ENCODE measurements at regions of chr3 and their contacts with region 1.

Region 1: GRCh38 chr3:37543666-37544065 is 318.0 kb upstream of the CTDSPL start:
- DNase-seq: peak; percentile 31 to 61
- ATAC-seq: peak; percentile 46 to 50
- H3K4me3 ChIP-seq: no peak overlapping the region
- H3K27ac ChIP-seq: no peak overlapping the region
- H3K4me1 ChIP-seq: peaks cover 29 to 38% of the 10 kb centered on the region in 2 donors
- H3K27me3 ChIP-seq: no peaks in the 10 kb centered on the region
- CTCF ChIP-seq: no peak
- POLR2A ChIP-seq: no peak

Region 2: GRCh38 chr3:37456270-37456708 is 87.4 kb before region 1 on chr3:
- in situ Hi-C with region 1: loop called in 1 of 4 experiments (anchors 5 kb)
- intact Hi-C with region 1: loop called (anchors 1 kb)
- DNase-seq: peak; percentile 85 to 90
- ATAC-seq: peak; percentile 72 to 76
- H3K4me3 ChIP-seq: peak overlapping the region; percentile 2 to 34 (median 14)
- H3K27ac ChIP-seq: peak overlapping the region; percentile 75 to 84 (median 82)
- H3K4me1 ChIP-seq: peaks cover 65 to 66% of the 10 kb centered on the region in 2 donors
- H3K27me3 ChIP-seq: no peaks in the 10 kb centered on the region
- CTCF ChIP-seq: peak in 1 of 5 experiments; percentile 17
- POLR2A ChIP-seq: peak; percentile 59

Region 3: DNA sequence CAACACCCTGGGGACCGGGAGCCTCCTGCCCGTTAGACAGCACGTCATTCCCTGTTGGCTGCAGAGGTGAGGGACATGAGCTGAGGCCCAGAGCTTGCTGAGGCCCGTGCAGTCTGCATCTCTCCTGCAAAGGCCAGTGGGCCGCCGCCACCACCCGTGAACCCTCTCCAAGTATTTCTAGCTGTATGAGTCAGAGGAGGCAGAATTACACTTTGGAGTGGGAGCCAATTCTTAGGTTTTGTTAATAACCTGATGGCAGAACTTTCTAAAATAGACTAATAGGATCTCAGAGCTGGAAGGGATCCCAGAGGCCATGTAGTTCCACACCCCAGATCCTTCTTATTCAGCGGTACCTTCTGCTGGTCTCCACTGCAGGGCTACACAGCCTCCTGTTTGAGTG is 17.2 kb before region 1 on chr3:
- in situ Hi-C with region 1: no loop called
- intact Hi-C with region 1: loop called (anchors 2 kb)
- DNase-seq: peak; percentile 75 to 90
- ATAC-seq: peak; percentile 97
- H3K4me3 ChIP-seq: no peak overlapping the region
- H3K27ac ChIP-seq: peak overlapping the region; percentile 70 to 78 (median 75)
- H3K4me1 ChIP-seq: peaks cover 8 to 20% of the 10 kb centered on the region in 2 donors
- H3K27me3 ChIP-seq: no peaks in the 10 kb centered on the region
- CTCF ChIP-seq: no peak
- POLR2A ChIP-seq: no peak

Region 4: DNA sequence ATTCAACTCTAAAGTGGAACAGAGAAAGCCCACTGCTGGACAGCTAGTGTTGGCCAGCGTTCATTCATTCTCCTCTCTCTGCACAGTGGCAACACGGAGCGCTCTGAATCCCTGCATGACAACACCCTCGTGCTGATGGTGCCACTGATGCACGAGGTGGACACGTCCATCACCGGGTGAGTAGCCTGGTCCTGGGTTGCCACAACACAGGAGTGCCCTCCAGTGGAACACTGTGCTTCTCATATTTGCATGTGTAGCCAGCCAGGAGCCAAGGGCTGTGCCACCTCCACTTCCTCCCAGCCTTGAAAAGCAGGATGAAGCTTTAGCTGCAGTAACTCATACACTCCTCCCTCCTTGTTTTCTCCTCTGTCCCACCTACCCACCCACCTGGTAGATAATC is 198.0 kb after region 1 on chr3:
- in situ Hi-C with region 1: no loop called
- intact Hi-C with region 1: no loop called
- DNase-seq: peak in 1 of 2 donors; percentile 27
- ATAC-seq: peak; percentile 23 to 27
- H3K4me3 ChIP-seq: no peak overlapping the region
- H3K27ac ChIP-seq: no peak overlapping the region
- H3K4me1 ChIP-seq: no peaks in the 10 kb centered on the region
- H3K27me3 ChIP-seq: no peaks in the 10 kb centered on the region
- CTCF ChIP-seq: peak in 3 of 5 experiments; percentile 19 to 40 (median 35)
- POLR2A ChIP-seq: no peak